ENCODE measurements at regions of chr6 and their contacts with region 1.

Region 1: GRCh38 chr6:13395272-13396237 is 67.2 kb upstream of the TBC1D7 start:
- DNase-seq: peak; percentile 62
- CTCF ChIP-seq: no peak

Region 2: DNA sequence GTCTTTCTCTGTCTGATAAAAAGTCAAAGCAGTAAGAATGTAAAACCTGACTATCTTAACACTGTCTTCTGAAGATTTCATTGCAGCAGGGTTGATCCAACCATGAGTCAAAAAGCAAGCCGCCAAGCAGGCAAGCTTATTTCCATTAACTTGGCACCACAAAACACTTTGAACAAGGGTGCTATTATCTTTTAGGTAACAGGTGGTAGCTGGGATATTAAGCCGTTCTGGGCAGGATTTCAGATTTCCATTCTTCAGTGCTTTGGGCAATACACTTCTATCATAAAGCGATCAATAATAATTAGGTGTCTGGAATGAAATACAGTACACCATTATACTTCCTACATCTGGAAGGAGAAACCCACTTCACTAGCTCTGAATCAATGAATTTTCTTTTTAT is 249.1 kb before region 1 on chr6:
- CTCF ChIA-PET with region 1: no interaction called
- POLR2A ChIA-PET with region 1: no interaction called
- DNase-seq: no peak
- CTCF ChIP-seq: no peak

Region 3: GRCh38 chr6:13159300-13159699 is 236.3 kb before region 1 on chr6:
- CTCF ChIA-PET with region 1: no interaction called
- POLR2A ChIA-PET with region 1: no interaction called
- DNase-seq: no peak
- CTCF ChIP-seq: no peak

Region 4: DNA sequence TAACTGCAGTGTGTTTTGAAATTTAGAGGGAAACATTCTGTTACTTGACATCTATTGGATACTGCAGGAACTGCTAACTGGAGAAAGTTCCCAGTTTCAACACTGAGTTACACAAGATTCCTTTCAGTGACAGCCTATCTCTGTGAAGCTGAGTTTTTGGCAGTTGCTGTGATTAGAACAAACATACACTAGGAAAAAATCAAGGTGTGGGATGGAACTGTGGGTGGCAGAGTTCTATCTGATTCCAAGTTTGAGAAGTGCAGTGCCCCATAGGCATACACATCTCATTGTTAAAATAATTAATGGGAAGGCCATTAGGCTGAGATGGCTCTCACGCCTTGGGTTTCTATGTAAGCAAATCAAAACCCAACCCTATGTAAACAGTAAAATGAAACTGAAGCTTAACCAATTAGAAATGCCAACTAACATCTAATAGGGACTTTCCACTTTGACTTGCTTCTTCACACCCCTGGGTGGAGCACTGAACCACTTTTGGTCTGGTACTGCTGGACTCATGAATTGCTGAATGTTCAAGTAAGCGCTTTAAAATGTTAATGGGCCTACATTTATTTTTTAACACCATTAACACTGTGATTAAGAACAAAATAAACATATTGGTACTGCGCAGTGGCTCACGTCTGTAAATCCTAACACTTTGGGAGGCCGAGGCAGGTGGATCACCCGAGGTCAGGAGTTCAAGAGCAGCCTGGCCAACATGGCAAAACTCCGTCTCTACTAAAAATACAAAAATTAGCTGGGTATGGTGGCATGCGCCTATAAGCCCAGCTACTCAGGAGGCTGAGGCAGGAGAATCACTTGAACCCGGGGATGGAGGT is 12.0 kb before region 1 on chr6:
- CTCF ChIA-PET with region 1: interaction called, 13 read pairs
- POLR2A ChIA-PET with region 1: interaction called, 8 read pairs
- DNase-seq: peak; percentile 67
- CTCF ChIP-seq: peak; percentile 25

Region 5: DNA sequence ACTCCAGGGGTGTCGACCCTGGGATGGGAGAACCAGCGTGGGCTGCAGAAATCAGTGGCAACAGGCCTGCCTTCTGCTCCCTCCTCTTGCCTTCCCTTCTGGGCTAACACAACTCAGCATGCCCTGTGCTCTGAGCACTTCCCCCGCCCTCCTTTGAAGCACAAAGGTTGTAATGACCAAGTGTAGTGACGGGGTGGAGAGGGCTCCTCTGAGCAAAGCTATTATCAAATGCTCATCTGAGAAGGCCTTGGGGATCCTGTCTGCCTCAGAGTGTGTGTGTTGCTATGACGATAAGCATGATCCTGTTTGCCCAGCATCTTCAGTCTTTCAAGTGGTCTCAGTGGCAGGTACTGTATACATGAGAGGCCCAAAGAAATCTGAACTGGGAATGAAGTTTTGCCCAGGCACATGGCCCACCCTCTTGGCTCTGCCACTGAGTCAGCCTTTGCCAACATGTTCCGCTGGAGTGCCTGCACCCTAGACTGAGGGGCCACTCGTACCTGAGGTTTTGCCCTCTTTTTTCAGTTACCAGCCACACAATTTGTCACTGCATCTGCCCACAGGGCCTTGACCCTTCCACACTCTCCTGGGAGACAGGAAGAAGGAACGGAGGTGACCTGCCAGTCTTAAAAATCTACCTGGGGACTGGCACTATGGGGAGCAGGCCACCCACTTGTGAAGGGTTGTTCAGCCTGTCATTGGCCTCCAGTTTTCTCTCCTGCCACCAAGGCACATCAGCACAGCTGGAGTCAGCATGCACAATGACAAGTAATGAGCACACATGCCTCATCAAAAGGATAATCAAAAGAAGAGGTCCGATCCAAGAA is 17.3 kb after region 1 on chr6:
- CTCF ChIA-PET with region 1: interaction called, 25 read pairs
- POLR2A ChIA-PET with region 1: no interaction called
- DNase-seq: no peak
- CTCF ChIP-seq: no peak

Measured in GM10248 (cell line).